Transverse colon (tissue), 4 donors: ENCODE measurements at regions of chr19 and their contacts with region 1.

Region 1: GRCh38 chr19:11446652-11447301 is 11.3 kb downstream of the PRKCSH start:
- DNase-seq: peak; percentile 50
- H3K4me3 ChIP-seq: no peak overlapping the region
- H3K27ac ChIP-seq: no peak overlapping the region
- H3K4me1 ChIP-seq: peaks cover 0 to 3% (median 0%) of the 10 kb centered on the region in 4 donors
- H3K27me3 ChIP-seq: no peaks in the 10 kb centered on the region
- CTCF ChIP-seq: peak; percentile 70 to 88 (median 76)
- EP300 ChIP-seq: no peak
- POLR2A ChIP-seq: no peak

Region 2: GRCh38 chr19:11111117-11111774 is 335.5 kb before region 1 on chr19:
- in situ Hi-C with region 1: no loop called
- intact Hi-C with region 1: loop called (anchors 10 kb)
- DNase-seq: no peak
- H3K4me3 ChIP-seq: no peak overlapping the region
- H3K27ac ChIP-seq: no peak overlapping the region
- H3K4me1 ChIP-seq: no peaks in the 10 kb centered on the region
- H3K27me3 ChIP-seq: no peaks in the 10 kb centered on the region
- CTCF ChIP-seq: no peak
- EP300 ChIP-seq: no peak
- POLR2A ChIP-seq: no peak